ENCODE measurements at regions of chr11 and their contacts with region 1.

Region 1: DNA sequence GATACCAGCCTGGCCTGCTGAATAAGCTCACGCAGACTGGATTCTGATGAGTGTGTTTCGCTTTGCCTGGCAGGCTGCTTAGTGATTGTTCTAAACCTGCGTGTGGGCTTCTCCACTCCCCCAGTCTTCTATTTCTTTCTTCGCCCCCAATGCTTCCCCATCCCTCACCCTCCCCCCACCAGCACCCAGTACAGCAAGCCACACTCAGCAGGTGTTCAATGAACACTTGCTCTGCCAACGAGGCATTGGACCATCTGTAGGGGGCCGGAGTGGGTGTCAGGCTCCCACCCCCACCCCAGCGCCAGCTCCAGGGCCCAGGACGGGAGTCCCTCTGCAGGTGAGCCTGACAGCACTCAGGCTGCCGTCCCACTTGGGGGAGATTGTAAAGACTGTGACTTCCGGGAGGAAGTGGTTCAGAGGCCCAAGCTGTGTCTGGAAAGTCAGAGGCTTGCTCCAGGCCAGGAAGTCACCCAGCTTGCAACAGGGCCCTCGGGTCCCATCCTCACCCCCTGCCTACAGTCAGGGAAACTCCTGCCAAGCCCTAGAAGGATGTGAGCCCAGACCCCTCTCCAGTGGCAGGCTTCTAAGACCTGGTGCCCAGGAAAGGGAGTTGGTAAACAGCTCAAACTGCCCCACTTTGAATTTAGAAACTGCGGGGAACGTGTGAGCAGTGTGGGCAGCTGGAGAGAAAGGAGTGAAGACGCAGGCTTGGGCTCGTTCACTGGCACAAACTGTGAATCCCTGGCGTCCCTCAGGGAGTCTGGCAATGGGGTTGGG is 66.3 kb upstream of the PRDM11 start:
- DNase-seq: no peak
- ATAC-seq: peak in 2 of 4 donors; percentile 30 to 49
- H3K4me3 ChIP-seq: no peak overlapping the region
- H3K27ac ChIP-seq: no peak overlapping the region
- H3K4me1 ChIP-seq: no peaks in the 10 kb centered on the region
- H3K27me3 ChIP-seq: no peaks in the 10 kb centered on the region
- CTCF ChIP-seq: no peak

Region 2: DNA sequence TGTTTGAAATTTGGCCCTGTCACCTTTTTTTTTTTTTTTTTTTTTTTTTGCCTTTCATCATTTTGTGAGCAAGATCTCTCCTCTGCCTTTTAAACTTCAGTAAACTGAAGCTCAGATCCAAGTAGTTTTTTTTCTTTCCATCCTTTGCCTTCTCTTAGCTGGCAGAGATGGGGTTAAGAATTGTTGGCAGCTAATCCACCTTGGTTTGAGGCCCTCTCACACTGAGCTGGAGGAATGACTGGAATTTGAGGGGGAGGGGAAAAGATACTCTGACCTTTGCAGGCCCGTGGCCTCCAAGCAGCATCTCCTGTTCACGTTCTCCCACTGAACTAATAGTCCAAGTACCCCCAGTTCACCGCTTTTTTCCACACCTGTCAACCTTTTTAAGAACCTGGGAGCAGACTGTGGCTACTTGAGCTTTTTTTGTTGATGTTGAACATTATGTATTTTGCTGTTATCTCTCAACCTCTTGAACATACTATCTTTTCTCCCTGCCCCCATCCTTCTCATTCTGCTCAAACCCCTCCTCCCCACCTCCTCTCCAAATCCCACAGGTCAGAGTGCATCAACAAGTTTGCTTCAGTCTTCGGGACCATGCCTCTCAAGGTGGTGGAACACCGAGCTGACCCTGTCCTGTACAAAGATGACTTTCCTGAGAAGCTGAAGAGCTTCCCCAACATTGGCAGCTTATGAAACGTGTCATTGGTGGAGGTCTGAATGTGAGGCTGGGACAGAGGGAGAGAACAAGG is 836.4 kb before region 1 on chr11:
- intact Hi-C with region 1: no loop called
- DNase-seq: peak in 1 of 6 donors; percentile 12
- ATAC-seq: peak in 3 of 4 donors; percentile 61 to 73 (median 69)
- H3K4me3 ChIP-seq: no peak overlapping the region
- H3K27ac ChIP-seq: no peak overlapping the region
- H3K4me1 ChIP-seq: peaks cover 0 to 5% (median 0%) of the 10 kb centered on the region in 3 donors
- H3K27me3 ChIP-seq: no peaks in the 10 kb centered on the region
- CTCF ChIP-seq: no peak

Region 3: GRCh38 chr11:44565211-44565952 is 514.7 kb before region 1 on chr11 and contains the start of gene CD82:
- intact Hi-C with region 1: loop called in 1 of 3 experiments (anchors 10 kb)
- DNase-seq: peak; percentile 100
- ATAC-seq: peak; percentile 87 to 93 (median 92)
- H3K4me3 ChIP-seq: peak within 1 kb of the TSS; percentile 36 to 71 (median 60)
- H3K27ac ChIP-seq: peak within 1 kb of the TSS; percentile 84 to 99 (median 93)
- H3K4me1 ChIP-seq: peaks cover 8 to 32% (median 10%) of the 10 kb centered on the region in 3 donors
- H3K27me3 ChIP-seq: no peaks in the 10 kb centered on the region
- CTCF ChIP-seq: peak in 1 of 4 donors; percentile 22
- total RNA-seq, gene CD82: 26.5 to 45.6 (median 32.5) TPM

Region 4: GRCh38 chr11:44911029-44911814 is 168.9 kb before region 1 on chr11:
- intact Hi-C with region 1: no loop called
- DNase-seq: peak in 5 of 6 donors; percentile 70 to 88 (median 78)
- ATAC-seq: peak; percentile 86 to 95 (median 92)
- H3K4me3 ChIP-seq: no peak overlapping the region
- H3K27ac ChIP-seq: no peak overlapping the region
- H3K4me1 ChIP-seq: no peaks in the 10 kb centered on the region
- H3K27me3 ChIP-seq: no peaks in the 10 kb centered on the region
- CTCF ChIP-seq: peak; percentile 74 to 91 (median 88)